ENCODE measurements at regions of chr19 and their contacts with region 1.

Region 1: DNA sequence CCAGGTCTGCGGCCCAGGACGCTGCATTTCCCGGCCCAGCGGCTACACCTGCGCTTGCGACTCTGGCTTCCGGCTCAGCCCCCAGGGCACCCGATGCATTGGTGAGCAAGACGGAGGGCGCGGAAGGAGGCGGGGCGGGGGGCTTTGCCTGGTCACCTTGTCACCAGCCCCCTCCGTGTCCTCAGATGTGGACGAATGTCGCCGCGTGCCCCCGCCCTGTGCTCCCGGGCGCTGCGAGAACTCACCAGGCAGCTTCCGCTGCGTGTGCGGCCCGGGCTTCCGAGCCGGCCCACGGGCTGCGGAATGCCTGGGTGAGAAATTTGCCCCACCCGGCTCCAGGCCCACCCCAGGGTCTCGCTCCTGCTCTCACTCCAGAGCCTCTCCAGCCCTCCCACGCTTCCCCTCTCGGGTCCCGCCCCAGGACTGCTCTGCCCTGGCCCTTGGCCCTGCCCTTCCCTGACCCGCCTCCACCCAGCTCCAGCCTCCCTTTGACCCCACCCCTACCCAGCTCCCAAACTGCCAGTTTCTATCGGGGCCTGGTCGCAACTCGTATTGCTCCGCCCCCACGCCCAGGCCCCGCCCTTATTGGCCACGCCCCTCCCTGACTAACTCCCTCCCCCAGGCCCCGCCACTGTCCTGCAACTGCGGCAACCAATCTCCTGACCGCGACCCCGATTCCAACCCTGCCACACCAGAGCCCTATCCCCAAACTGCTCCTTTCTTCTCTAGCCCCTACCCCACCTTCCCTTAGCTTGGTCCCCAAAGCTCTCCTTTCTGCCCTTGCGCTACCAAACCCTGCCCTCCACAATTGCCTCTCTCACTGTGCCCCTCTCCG is 8.6 kb downstream of the LTBP4 start:
- DNase-seq: peak; percentile 67 to 96 (median 78)
- ATAC-seq: peak; percentile 64
- H3K4me3 ChIP-seq: peak overlapping the region; percentile 63
- H3K4me3 Mint-ChIP-seq: peak overlapping the region; percentile 75 to 92 (median 86)
- H3K27ac ChIP-seq: peak overlapping the region; percentile 74
- H3K27ac Mint-ChIP-seq: peak overlapping the region; percentile 89 to 100 (median 92)
- H3K4me1 ChIP-seq: peaks cover 35 to 45% of the 10 kb centered on the region in 2 donors
- H3K4me1 Mint-ChIP-seq: peaks cover 20 to 78% (median 63%) of the 10 kb centered on the region in 7 donors
- H3K27me3 ChIP-seq: no peaks in the 10 kb centered on the region
- H3K27me3 Mint-ChIP-seq: peaks cover 0 to 8% (median 0%) of the 10 kb centered on the region in 5 donors

Region 2: DNA sequence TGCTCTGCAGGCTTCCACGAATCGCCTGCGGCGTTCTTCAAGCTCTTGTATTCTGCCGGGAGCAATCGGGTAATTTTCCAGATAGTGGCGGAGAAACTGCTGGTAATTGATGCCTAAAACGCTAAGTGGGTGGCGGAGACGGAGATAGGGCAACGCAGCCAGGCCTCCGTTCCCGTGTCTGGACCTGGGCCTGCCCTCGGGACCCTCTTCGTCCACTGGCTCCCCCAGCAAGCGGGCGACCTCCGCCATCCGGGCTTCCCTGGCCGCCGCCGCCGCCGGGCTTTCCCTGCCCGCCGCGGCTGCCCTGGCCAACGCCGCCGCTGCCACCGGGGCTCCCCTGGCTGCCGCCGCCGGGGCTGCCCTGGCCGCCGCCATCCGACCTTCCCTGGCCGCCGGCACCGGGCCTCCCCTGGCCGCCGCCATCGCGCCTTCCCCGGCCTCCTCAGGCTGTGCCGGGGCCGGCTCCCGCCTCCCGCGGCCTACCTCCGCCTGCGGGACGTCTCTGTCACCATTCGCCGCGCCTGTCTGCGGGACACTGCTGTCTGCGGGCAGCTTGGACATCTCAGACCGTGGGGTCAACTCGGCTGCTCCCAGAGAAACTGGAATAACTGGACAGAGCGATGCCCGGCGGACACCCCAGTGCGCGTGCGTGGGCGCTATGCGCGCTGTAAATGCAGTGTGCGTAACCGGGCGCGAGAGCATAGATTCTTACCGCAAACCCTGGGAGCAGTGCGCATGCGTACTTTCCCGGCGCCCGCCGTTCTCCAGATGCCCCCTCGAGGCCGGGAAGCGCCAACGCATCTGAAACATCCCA is 1070.1 kb before region 1 on chr19 and contains the start of gene EID2:
- CTCF ChIA-PET with region 1: no interaction called
- POLR2A ChIA-PET with region 1: no interaction called
- intact Hi-C with region 1: loop called in 1 of 2 experiments (anchors 2 kb)
- DNase-seq: peak; percentile 90 to 95 (median 91)
- ATAC-seq: peak; percentile 96
- H3K4me3 ChIP-seq: peak within 1 kb of the TSS; percentile 94
- H3K4me3 Mint-ChIP-seq: peak within 1 kb of the TSS; percentile 95 to 98 (median 97)
- H3K27ac ChIP-seq: peak within 1 kb of the TSS; percentile 98
- H3K27ac Mint-ChIP-seq: peak within 1 kb of the TSS; percentile 94 to 99 (median 98)
- H3K4me1 ChIP-seq: peaks cover 16 to 21% of the 10 kb centered on the region in 2 donors
- H3K4me1 Mint-ChIP-seq: peaks cover 45 to 85% (median 68%) of the 10 kb centered on the region in 7 donors
- H3K27me3 ChIP-seq: no peaks in the 10 kb centered on the region
- H3K27me3 Mint-ChIP-seq: peaks cover 0 to 2% (median 0%) of the 10 kb centered on the region in 5 donors
- total RNA-seq, gene EID2: 12.2 to 29.1 (median 16.1) TPM

Region 3: DNA sequence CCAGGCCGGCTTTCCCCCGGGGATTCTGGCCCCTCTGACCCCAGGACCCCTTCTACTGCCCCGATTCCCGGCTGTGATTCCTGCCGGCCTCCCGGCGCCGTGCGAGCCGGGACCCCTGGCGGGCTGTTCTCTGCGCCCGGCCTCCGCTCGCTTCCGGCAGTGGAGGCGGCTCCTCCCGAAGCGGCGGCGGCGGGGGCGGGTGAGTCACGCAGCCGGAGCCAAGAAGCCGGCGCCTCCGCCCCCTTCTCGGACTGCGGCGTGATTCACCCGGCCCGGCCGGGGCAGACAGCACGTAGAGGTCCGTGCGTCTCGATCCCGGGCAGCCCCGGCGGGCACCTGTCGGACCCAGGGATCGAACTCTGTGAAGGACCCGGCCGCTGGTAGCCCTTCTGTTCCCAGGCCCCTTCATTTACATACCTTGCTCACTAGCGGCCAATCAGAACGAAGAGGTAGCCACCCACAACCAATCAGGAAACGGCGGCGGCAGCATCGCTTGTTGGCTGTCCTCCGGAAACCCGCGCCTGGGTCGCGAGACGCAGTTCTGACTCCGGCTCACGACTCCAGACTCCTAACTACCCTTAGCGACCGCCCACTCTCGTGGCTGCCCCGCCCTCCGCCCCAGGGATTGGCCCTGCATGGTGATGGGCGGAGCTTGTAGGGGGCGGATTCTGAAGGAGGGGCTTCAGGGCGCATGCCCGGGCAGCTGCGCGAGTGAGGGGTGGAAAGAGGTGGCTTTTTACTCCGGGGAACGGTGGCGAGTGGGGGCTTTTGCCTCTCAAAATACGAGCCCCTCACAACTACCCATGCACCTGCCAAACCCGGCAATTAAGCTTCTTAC is 184.1 kb before region 1 on chr19 and contains the start of gene SERTAD1:
- CTCF ChIA-PET with region 1: no interaction called
- POLR2A ChIA-PET with region 1: interaction called, 11 read pairs
- intact Hi-C with region 1: loop called in 1 of 2 experiments (anchors 5 kb)
- DNase-seq: peak; percentile 99 to 100 (median 100)
- ATAC-seq: peak; percentile 96
- H3K4me3 ChIP-seq: peak within 1 kb of the TSS; percentile 77
- H3K4me3 Mint-ChIP-seq: peak within 1 kb of the TSS; percentile 90 to 99 (median 96)
- H3K27ac ChIP-seq: peak within 1 kb of the TSS; percentile 87
- H3K27ac Mint-ChIP-seq: peak within 1 kb of the TSS; percentile 92 to 100 (median 98)
- H3K4me1 ChIP-seq: peaks cover 15 to 18% of the 10 kb centered on the region in 2 donors
- H3K4me1 Mint-ChIP-seq: peaks cover 12 to 38% (median 24%) of the 10 kb centered on the region in 7 donors
- H3K27me3 ChIP-seq: no peaks in the 10 kb centered on the region
- H3K27me3 Mint-ChIP-seq: peaks cover 0 to 2% (median 0%) of the 10 kb centered on the region in 5 donors
- total RNA-seq, gene SERTAD1: 8.1 to 30.9 (median 13.5) TPM

Region 4: DNA sequence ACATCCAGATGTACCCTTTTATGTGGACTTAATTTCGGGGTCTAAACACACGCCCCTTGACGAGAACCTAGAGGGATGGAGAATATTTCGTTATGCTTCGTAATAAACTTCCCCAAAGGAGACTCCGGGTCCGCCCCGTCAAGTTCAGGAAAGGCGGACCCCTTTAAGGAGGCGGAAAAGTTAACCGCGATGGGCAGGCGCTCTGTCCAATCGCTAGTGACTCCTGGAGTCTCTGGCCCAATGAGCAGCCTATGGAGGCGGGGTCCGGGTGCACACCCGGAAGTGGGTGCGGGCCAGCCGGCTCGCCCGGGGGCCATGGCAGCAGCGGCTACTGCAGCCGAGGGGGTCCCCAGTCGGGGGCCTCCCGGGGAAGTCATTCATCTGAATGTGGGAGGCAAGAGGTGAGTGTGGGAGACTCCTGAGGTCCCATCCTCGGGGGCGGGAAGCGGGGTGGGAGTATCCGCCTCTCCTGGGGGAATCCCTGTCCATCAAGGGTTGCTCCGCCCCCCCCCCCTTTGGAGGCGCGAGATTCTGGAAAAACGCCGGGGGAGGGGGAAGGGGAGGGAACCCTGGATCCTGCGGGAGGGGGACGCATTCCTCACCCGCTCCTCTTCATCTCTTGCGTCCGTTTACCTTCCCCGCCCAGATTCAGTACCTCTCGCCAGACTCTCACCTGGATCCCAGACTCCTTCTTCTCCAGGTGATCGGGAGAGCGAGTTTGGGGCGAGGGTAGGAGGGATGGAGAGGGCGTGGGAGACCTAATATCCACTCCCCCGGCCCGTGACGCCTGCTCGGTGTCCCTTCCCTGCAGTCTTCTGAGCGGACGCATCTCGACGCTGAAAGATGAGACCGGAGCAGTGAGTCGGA is 33.0 kb before region 1 on chr19 and contains the start of gene SHKBP1:
- CTCF ChIA-PET with region 1: interaction called, 3 read pairs
- POLR2A ChIA-PET with region 1: interaction called, 11 read pairs
- intact Hi-C with region 1: loop called in 1 of 2 experiments (anchors 1 kb)
- DNase-seq: peak; percentile 84 to 93 (median 92)
- ATAC-seq: peak; percentile 97
- H3K4me3 ChIP-seq: peak within 1 kb of the TSS; percentile 84
- H3K4me3 Mint-ChIP-seq: peak within 1 kb of the TSS; percentile 80 to 96 (median 90)
- H3K27ac ChIP-seq: peak within 1 kb of the TSS; percentile 77
- H3K27ac Mint-ChIP-seq: peak within 1 kb of the TSS; percentile 79 to 96 (median 87)
- H3K4me1 ChIP-seq: peaks cover 14 to 22% of the 10 kb centered on the region in 2 donors
- H3K4me1 Mint-ChIP-seq: peaks cover 16 to 26% (median 20%) of the 10 kb centered on the region in 7 donors
- H3K27me3 ChIP-seq: no peaks in the 10 kb centered on the region
- H3K27me3 Mint-ChIP-seq: no peaks in the 10 kb centered on the region
- total RNA-seq, gene SHKBP1: 98.4 to 218 (median 139) TPM

Region 5: GRCh38 chr19:40633207-40633606 is 23.4 kb after region 1 on chr19:
- CTCF ChIA-PET with region 1: interaction called, 42 read pairs
- POLR2A ChIA-PET with region 1: interaction called, 19 read pairs
- intact Hi-C with region 1: loop called in 1 of 2 experiments (anchors 1 kb)
- DNase-seq: no peak
- ATAC-seq: no peak
- H3K4me3 ChIP-seq: no peak overlapping the region
- H3K4me3 Mint-ChIP-seq: no peak overlapping the region
- H3K27ac ChIP-seq: no peak overlapping the region
- H3K27ac Mint-ChIP-seq: peak overlapping the region in 2 of 9 donors; percentile 11 to 78
- H3K4me1 ChIP-seq: peaks cover 4 to 5% of the 10 kb centered on the region in 2 donors
- H3K4me1 Mint-ChIP-seq: peaks cover 7 to 19% (median 16%) of the 10 kb centered on the region in 7 donors
- H3K27me3 ChIP-seq: no peaks in the 10 kb centered on the region
- H3K27me3 Mint-ChIP-seq: peaks cover 0 to 20% (median 0%) of the 10 kb centered on the region in 5 donors

Region 6: DNA sequence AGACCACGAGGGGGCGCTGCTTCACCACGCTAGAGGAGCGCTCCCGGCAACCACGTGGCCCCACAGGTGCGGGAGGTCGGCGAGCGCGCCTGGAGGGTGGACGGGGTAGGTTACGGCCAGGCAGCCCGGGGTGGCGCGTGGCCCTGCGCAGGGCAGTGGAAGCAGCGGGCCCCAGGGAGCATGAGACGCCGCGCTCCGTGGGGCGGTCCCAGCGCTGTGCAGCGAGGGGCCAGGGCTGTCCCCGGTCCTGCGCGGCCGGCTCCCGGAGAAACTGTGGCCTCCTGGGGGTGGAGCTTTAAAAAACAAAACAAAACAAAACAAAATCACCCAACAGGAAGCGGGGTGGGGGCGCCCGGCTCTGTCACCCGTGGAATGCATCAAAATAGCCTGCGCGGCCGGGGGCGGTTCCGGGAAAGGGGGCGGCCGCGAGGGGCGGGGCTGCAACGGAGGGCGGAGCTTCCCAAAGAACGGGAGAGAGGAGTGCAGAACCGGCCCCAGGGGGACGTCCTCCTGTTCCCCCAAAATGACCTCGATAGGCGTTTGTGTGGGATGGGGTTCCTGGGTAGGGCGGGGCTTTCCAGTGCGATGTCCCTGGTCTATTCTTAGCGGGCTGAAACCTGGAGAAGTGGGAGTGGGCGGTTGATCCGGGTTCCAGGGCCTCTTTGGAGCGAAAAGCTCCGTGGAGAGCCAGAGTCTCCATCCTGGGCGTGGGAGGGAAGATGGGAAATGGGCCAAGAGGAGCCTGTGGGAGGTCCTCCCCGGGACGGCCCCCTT is 53.3 kb after region 1 on chr19:
- CTCF ChIA-PET with region 1: no interaction called
- POLR2A ChIA-PET with region 1: no interaction called
- intact Hi-C with region 1: no loop called
- DNase-seq: peak; percentile 81 to 96 (median 92)
- ATAC-seq: peak; percentile 96
- H3K4me3 ChIP-seq: peak overlapping the region; percentile 75
- H3K4me3 Mint-ChIP-seq: peak overlapping the region; percentile 76 to 91 (median 84)
- H3K27ac ChIP-seq: peak overlapping the region; percentile 75
- H3K27ac Mint-ChIP-seq: peak overlapping the region; percentile 67 to 91 (median 84)
- H3K4me1 ChIP-seq: peaks cover 0 to 7% of the 10 kb centered on the region in 2 donors
- H3K4me1 Mint-ChIP-seq: peaks cover 0 to 27% (median 6%) of the 10 kb centered on the region in 7 donors
- H3K27me3 ChIP-seq: no peaks in the 10 kb centered on the region
- H3K27me3 Mint-ChIP-seq: peaks cover 0 to 4% (median 0%) of the 10 kb centered on the region in 5 donors

Region 7: GRCh38 chr19:40777937-40778705 is 168.3 kb after region 1 on chr19 and contains the start of gene RAB4B:
- CTCF ChIA-PET with region 1: no interaction called
- POLR2A ChIA-PET with region 1: no interaction called
- intact Hi-C with region 1: loop called in 1 of 2 experiments (anchors 5 kb)
- DNase-seq: peak; percentile 99 to 100 (median 100)
- ATAC-seq: peak; percentile 92
- H3K4me3 ChIP-seq: peak within 1 kb of the TSS; percentile 97
- H3K4me3 Mint-ChIP-seq: peak within 1 kb of the TSS; percentile 91 to 99 (median 96)
- H3K27ac ChIP-seq: peak within 1 kb of the TSS; percentile 92
- H3K27ac Mint-ChIP-seq: peak within 1 kb of the TSS; percentile 87 to 99 (median 98)
- H3K4me1 ChIP-seq: peaks cover 18 to 24% of the 10 kb centered on the region in 2 donors
- H3K4me1 Mint-ChIP-seq: peaks cover 31 to 49% (median 39%) of the 10 kb centered on the region in 7 donors
- H3K27me3 ChIP-seq: no peaks in the 10 kb centered on the region
- H3K27me3 Mint-ChIP-seq: no peaks in the 10 kb centered on the region
- total RNA-seq, gene RAB4B: 37.6 to 63.0 (median 52.5) TPM